ENCODE measurements at regions of chr10 and their contacts with region 1.

Region 1: GRCh38 chr10:106705681-106706100 is 458.8 kb downstream of the SORCS1 start:
- DNase-seq: peak; percentile 63
- ATAC-seq: peak; percentile 68 to 70

Region 2: DNA sequence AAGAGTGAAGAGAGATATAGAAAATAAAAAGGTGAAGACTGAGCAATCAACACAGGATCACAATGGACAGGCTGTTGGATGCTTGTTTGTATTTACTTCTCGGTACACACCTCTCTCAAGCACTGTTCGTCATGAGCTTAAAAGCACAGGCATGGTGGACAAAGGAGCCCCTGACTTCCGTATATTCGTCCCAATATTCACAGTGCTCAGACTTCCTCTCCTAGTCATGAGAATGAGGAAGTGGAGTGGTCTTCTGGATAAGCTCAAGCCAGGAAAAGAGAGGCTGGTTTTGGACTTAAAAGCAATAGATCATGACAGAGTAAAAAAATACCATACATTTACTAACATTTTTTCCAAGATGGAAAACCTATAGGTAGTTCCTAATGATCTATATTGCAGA is 286.4 kb after region 1 on chr10:
- intact Hi-C with region 1: no loop called
- DNase-seq: no peak
- ATAC-seq: peak in 1 of 2 donors; percentile 36

Region 3: GRCh38 chr10:108544494-108545120 is 1838.9 kb after region 1 on chr10:
- intact Hi-C with region 1: loop called in 1 of 2 experiments (anchors 10 kb)
- DNase-seq: peak; percentile 57
- ATAC-seq: peak in 1 of 2 donors; percentile 61

Measured in left cardiac atrium (tissue), 4 donors.